Activated T-helper 1 cell treated with anti-CD3 and anti-CD28 coated beads, Interleukin-12 subunit alpha, Interleukin-12 subunit beta, Interleukin-2, Interleukin-4 antibody, amounts not matched to agents 30 ng/mL and 10 ng/mL and 1 ng/mL, durations not matched to agents 14 hours and 24 hours and 36 hours (primary cell): ENCODE measurements at regions of chr1 and their contacts with region 1.

Region 1: DNA sequence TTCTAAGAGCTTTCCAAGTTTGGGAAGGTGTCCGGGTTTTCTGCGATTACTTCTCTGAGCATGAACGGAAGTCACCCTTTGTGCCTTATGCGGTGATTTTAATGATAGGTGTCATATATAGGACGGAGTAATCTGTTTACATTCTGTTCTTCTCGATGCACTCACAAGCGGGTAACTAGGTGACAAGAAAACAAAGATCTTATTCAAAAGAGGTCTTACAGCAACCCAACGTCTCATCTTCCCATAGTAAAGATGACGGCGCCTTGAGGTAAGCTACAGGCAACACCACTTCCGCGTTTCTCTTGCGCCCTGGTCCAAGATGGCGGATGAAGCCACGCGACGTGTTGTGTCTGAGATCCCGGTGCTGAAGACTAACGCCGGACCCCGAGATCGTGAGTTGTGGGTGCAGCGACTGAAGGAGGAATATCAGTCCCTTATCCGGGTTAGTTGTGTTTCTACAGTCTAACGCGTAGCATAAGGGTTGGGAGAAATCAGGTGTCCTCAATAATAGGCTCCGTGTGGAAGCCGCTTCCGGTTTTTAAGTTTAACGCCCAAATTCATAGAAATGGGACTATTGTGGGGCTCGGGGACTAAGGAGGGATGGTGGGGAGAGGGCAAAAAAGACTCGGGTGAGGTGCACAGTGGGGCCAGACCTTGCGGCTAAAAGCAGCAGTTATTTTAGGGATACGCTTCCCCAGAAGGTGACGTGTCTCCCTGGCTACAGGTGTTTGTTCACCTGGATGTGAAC is at the start of gene UFC1:
- DNase-seq: peak; percentile 80
- H3K4me3 Mint-ChIP-seq: peak within 1 kb of the TSS; percentile 99
- H3K27ac Mint-ChIP-seq: peak within 1 kb of the TSS; percentile 100
- H3K4me1 Mint-ChIP-seq: peaks cover 33% of the 10 kb centered on the region
- H3K27me3 Mint-ChIP-seq: no peaks in the 10 kb centered on the region
- total RNA-seq, gene UFC1: 86.3 and 94.5 TPM in 2 replicates

Region 2: GRCh38 chr1:161111527-161111926 is 42.3 kb before region 1 on chr1:
- intact Hi-C with region 1: no loop called
- DNase-seq: no peak
- H3K4me3 Mint-ChIP-seq: no peak overlapping the region
- H3K27ac Mint-ChIP-seq: no peak overlapping the region
- H3K4me1 Mint-ChIP-seq: peaks cover 60% of the 10 kb centered on the region
- H3K27me3 Mint-ChIP-seq: no peaks in the 10 kb centered on the region

Region 3: GRCh38 chr1:161139765-161140164 is 14.1 kb before region 1 on chr1:
- intact Hi-C with region 1: no loop called
- DNase-seq: no peak
- H3K4me3 Mint-ChIP-seq: no peak overlapping the region
- H3K27ac Mint-ChIP-seq: no peak overlapping the region
- H3K4me1 Mint-ChIP-seq: peaks cover 5% of the 10 kb centered on the region
- H3K27me3 Mint-ChIP-seq: no peaks in the 10 kb centered on the region

Region 4: GRCh38 chr1:161165742-161166668 is 12.2 kb after region 1 on chr1 and contains the start of gene PPOX:
- intact Hi-C with region 1: loop called (anchors 1 kb)
- DNase-seq: peak; percentile 95
- H3K4me3 Mint-ChIP-seq: peak within 1 kb of the TSS; percentile 87
- H3K27ac Mint-ChIP-seq: peak within 1 kb of the TSS; percentile 99
- H3K4me1 Mint-ChIP-seq: peaks cover 61% of the 10 kb centered on the region
- H3K27me3 Mint-ChIP-seq: no peaks in the 10 kb centered on the region
- total RNA-seq, gene PPOX: 25.1 and 26.0 TPM in 2 replicates

Region 5: DNA sequence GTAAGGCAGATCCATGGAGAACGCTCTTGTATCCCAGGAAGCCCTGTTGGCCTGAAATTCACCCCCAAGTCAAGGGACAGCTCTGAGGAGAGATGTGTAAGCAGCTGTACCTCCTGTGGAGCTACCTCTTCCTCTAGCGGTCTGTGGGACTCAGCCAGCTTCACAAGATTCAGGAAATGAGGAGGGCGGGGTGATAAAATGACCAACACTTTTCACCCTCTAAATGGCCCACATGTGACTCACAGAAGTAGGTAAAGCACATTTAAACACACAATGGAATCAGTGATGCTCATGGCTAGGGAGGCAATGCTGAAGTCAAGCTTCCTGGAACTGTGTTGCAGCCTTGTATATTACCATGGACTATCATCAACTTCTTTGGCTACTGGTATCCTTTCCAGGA is 1258.1 kb after region 1 on chr1 and contains the start of gene SH2D1B:
- intact Hi-C with region 1: no loop called
- DNase-seq: no peak
- H3K4me3 Mint-ChIP-seq: no peak within 1 kb of the TSS
- H3K27ac Mint-ChIP-seq: no peak within 1 kb of the TSS
- H3K4me1 Mint-ChIP-seq: no peaks in the 10 kb centered on the region
- H3K27me3 Mint-ChIP-seq: peaks cover 14% of the 10 kb centered on the region
- total RNA-seq, gene SH2D1B: 0.10 TPM in 1 of 2 replicates, not detected in the other